ENCODE measurements at regions of chr5 and their contacts with region 1.

Region 1: DNA sequence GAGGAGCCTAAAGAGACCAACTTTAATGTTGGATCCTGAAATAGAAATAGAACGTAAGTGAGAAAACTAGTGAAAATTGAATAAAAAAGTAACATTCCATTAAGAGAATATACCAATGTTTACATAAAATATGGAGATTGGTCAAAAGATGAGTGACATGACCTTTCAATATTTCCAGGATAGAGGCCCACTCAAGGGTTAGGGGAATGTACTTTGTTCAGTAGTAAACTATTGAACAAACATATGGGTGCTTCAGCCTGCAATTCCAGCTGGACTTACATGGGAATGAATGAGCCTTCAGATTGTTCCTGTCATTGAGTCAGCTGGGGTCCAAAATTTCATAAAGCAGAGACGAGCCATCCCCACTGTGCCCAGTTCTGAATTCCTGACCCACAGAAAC is 371.7 kb upstream of the POU5F2 start:
- DNase-seq: no peak
- H3K27ac ChIP-seq: no peak overlapping the region
- CTCF ChIP-seq: no peak

Region 2: GRCh38 chr5:94140300-94140699 is 27.2 kb after region 1 on chr5:
- CTCF ChIA-PET with region 1: interaction called, 10 read pairs
- POLR2A ChIA-PET with region 1: no interaction called
- DNase-seq: no peak
- H3K27ac ChIP-seq: no peak overlapping the region
- CTCF ChIP-seq: no peak

Region 3: DNA sequence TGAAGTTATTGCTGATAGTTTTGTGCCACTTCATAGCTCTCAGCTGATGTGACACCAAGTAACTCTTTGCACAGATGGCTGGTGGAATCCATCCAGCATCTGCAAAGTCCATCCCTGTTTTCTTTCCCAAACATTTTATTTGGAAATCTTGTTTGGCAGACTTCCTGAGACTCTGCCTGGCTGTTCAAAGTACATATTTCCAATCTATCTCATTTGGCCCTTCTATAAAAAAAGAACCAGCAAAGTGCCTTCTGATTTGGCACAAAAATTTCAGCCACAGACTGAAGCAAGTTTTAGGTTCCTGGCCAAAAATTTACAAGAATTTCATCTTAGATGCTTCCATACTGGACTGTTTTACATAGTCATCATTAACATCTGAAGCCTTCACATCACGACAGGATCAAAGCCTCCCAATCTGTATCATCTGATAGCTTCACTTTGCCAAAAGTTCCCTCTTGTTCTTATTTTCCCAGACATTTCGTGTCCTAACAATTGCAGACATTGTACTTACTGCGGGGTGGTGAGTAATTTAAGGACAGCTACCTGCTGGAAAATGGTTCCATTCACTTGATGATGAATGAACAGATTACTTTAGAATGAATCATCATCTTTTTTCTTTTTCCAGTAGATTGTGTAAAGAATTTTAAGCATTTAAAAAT is 128.0 kb after region 1 on chr5:
- CTCF ChIA-PET with region 1: no interaction called
- POLR2A ChIA-PET with region 1: no interaction called
- DNase-seq: peak; percentile 75
- H3K27ac ChIP-seq: no peak overlapping the region
- CTCF ChIP-seq: no peak